B cell (primary cell): ENCODE measurements at regions of chr11 and their contacts with region 1.

Region 1: GRCh38 chr11:119728651-119729580 is at the start of gene NECTIN1:
- DNase-seq: peak; percentile 93
- ATAC-seq: peak; percentile 88
- H3K4me3 ChIP-seq: peak within 1 kb of the TSS; percentile 44 to 72 (median 63)
- H3K4me3 Mint-ChIP-seq: peak within 1 kb of the TSS; percentile 96
- H3K27ac ChIP-seq: no peak within 1 kb of the TSS
- H3K27ac Mint-ChIP-seq: peak within 1 kb of the TSS; percentile 84
- H3K4me1 ChIP-seq: peaks cover 34 to 39% of the 10 kb centered on the region in 2 donors
- H3K4me1 Mint-ChIP-seq: peaks cover 32% of the 10 kb centered on the region
- H3K27me3 ChIP-seq: peaks cover 0 to 48% (median 17%) of the 10 kb centered on the region in 4 experiments
- H3K27me3 Mint-ChIP-seq: peaks cover 23% of the 10 kb centered on the region
- CTCF ChIP-seq: peak; percentile 97
- total RNA-seq, gene NECTIN1: 3.9 and 5.5 TPM in 2 replicates

Region 2: DNA sequence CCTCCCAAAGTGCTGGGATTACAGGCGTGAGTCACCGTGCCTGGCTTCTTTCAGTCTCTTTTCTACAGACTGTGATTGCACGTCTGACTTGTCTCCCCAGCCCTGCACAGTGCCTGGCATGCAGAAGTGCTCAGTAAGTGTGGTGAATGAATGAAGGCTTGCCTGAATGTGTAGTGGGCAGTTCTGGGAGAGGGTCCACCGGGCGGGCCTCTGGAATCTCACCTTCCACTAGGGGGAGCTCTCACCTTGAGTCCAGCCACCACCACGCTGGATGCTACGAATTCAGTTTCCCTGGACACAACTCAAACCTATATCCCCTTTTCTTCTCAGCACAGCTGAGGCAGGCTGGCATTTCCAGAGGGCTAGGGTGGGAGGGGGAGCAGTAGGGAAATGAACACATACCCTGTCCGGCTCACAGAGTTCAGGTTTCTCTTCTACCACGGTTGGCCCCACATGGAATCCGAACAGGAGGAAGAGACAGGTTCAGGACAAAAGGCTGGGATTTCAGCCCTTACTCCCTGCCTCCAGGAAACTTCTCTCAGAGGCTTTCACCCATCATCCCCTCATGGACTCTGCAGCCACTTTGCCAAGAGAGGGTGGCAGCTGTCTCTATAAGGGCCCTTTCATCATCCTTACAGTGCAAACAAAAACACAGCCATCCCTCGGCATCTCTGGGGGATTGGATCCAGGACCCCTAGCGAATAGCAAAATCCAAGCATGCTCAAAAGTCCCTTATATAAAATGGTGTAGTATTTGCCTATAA is 86.8 kb before region 1 on chr11:
- CTCF ChIA-PET with region 1: interaction called, 11 read pairs
- POLR2A ChIA-PET with region 1: no interaction called
- intact Hi-C with region 1: no loop called
- DNase-seq: peak; percentile 45
- ATAC-seq: no peak
- H3K4me3 ChIP-seq: no peak overlapping the region
- H3K4me3 Mint-ChIP-seq: no peak overlapping the region
- H3K27ac ChIP-seq: no peak overlapping the region
- H3K27ac Mint-ChIP-seq: no peak overlapping the region
- H3K4me1 ChIP-seq: no peaks in the 10 kb centered on the region
- H3K4me1 Mint-ChIP-seq: no peaks in the 10 kb centered on the region
- H3K27me3 ChIP-seq: no peaks in the 10 kb centered on the region
- H3K27me3 Mint-ChIP-seq: peaks cover 7% of the 10 kb centered on the region
- CTCF ChIP-seq: peak; percentile 60

Region 3: GRCh38 chr11:119673759-119674336 is 55.1 kb before region 1 on chr11:
- CTCF ChIA-PET with region 1: interaction called, 30 read pairs
- POLR2A ChIA-PET with region 1: interaction called, 3 read pairs
- intact Hi-C with region 1: no loop called
- DNase-seq: peak; percentile 80
- ATAC-seq: peak; percentile 81
- H3K4me3 ChIP-seq: peak overlapping the region in 3 of 5 experiments; percentile 2 to 44 (median 25)
- H3K4me3 Mint-ChIP-seq: peak overlapping the region; percentile 85
- H3K27ac ChIP-seq: peak overlapping the region in 1 of 2 donors; percentile 5
- H3K27ac Mint-ChIP-seq: peak overlapping the region; percentile 73
- H3K4me1 ChIP-seq: peaks cover 25 to 29% of the 10 kb centered on the region in 2 donors
- H3K4me1 Mint-ChIP-seq: peaks cover 28% of the 10 kb centered on the region
- H3K27me3 ChIP-seq: peaks cover 0 to 2% (median 0%) of the 10 kb centered on the region in 4 experiments
- H3K27me3 Mint-ChIP-seq: no peaks in the 10 kb centered on the region
- CTCF ChIP-seq: no peak

Region 4: GRCh38 chr11:119741369-119742262 is 12.7 kb after region 1 on chr11:
- CTCF ChIA-PET with region 1: interaction called, 19 read pairs
- POLR2A ChIA-PET with region 1: no interaction called
- intact Hi-C with region 1: loop called (anchors 2 kb)
- DNase-seq: peak; percentile 72
- ATAC-seq: peak; percentile 80
- H3K4me3 ChIP-seq: no peak overlapping the region
- H3K4me3 Mint-ChIP-seq: peak overlapping the region; percentile 24
- H3K27ac ChIP-seq: no peak overlapping the region
- H3K27ac Mint-ChIP-seq: no peak overlapping the region
- H3K4me1 ChIP-seq: peaks cover 20 to 21% of the 10 kb centered on the region in 2 donors
- H3K4me1 Mint-ChIP-seq: peaks cover 15% of the 10 kb centered on the region
- H3K27me3 ChIP-seq: peaks cover 0 to 45% (median 15%) of the 10 kb centered on the region in 4 experiments
- H3K27me3 Mint-ChIP-seq: peaks cover 61% of the 10 kb centered on the region
- CTCF ChIP-seq: peak; percentile 80

Region 5: DNA sequence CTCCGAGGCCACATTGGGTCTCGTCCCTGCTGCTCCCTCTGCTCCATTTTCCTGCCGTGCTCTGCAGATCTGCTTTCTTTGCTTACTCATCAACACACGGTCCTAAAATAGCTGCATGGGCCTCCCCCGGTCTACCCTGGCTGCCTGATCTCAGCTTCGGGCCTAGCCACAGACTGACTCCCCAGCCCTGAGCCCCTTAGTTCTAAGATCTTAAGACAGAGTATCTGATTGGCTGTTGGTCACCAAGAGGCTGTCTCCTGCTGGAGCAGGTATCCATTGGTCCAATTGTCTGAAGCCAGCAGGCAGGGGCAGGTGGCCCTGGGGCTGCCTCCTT is 53.8 kb after region 1 on chr11:
- CTCF ChIA-PET with region 1: no interaction called
- POLR2A ChIA-PET with region 1: no interaction called
- intact Hi-C with region 1: no loop called
- DNase-seq: no peak
- ATAC-seq: no peak
- H3K4me3 ChIP-seq: no peak overlapping the region
- H3K4me3 Mint-ChIP-seq: no peak overlapping the region
- H3K27ac ChIP-seq: no peak overlapping the region
- H3K27ac Mint-ChIP-seq: no peak overlapping the region
- H3K4me1 ChIP-seq: no peaks in the 10 kb centered on the region
- H3K4me1 Mint-ChIP-seq: no peaks in the 10 kb centered on the region
- H3K27me3 ChIP-seq: peaks cover 0 to 6% (median 2%) of the 10 kb centered on the region in 4 experiments
- H3K27me3 Mint-ChIP-seq: peaks cover 21% of the 10 kb centered on the region
- CTCF ChIP-seq: no peak

Region 6: GRCh38 chr11:119803726-119804294 is 74.9 kb after region 1 on chr11:
- CTCF ChIA-PET with region 1: no interaction called
- POLR2A ChIA-PET with region 1: no interaction called
- intact Hi-C with region 1: no loop called
- DNase-seq: no peak
- ATAC-seq: no peak
- H3K4me3 ChIP-seq: no peak overlapping the region
- H3K4me3 Mint-ChIP-seq: no peak overlapping the region
- H3K27ac ChIP-seq: no peak overlapping the region
- H3K27ac Mint-ChIP-seq: no peak overlapping the region
- H3K4me1 ChIP-seq: no peaks in the 10 kb centered on the region
- H3K4me1 Mint-ChIP-seq: no peaks in the 10 kb centered on the region
- H3K27me3 ChIP-seq: peaks cover 0 to 2% (median 0%) of the 10 kb centered on the region in 4 experiments
- H3K27me3 Mint-ChIP-seq: peaks cover 18% of the 10 kb centered on the region
- CTCF ChIP-seq: no peak

Region 7: GRCh38 chr11:120210626-120211521 is 482.0 kb after region 1 on chr11 and contains the start of gene OAF:
- CTCF ChIA-PET with region 1: no interaction called
- POLR2A ChIA-PET with region 1: no interaction called
- intact Hi-C with region 1: loop called (anchors 2 kb)
- DNase-seq: peak; percentile 81
- ATAC-seq: peak; percentile 85
- H3K4me3 ChIP-seq: peak within 1 kb of the TSS; percentile 51 to 74 (median 64)
- H3K4me3 Mint-ChIP-seq: peak within 1 kb of the TSS; percentile 93
- H3K27ac ChIP-seq: no peak within 1 kb of the TSS
- H3K27ac Mint-ChIP-seq: peak within 1 kb of the TSS; percentile 6
- H3K4me1 ChIP-seq: peaks cover 7 to 17% of the 10 kb centered on the region in 2 donors
- H3K4me1 Mint-ChIP-seq: peaks cover 12% of the 10 kb centered on the region
- H3K27me3 ChIP-seq: peaks cover 0 to 9% (median 3%) of the 10 kb centered on the region in 4 experiments
- H3K27me3 Mint-ChIP-seq: peaks cover 56% of the 10 kb centered on the region
- CTCF ChIP-seq: no peak
- total RNA-seq, gene OAF: 0.92 and 1.3 TPM in 2 replicates